ENCODE measurements at regions of chr1 and their contacts with region 1.

Region 1: DNA sequence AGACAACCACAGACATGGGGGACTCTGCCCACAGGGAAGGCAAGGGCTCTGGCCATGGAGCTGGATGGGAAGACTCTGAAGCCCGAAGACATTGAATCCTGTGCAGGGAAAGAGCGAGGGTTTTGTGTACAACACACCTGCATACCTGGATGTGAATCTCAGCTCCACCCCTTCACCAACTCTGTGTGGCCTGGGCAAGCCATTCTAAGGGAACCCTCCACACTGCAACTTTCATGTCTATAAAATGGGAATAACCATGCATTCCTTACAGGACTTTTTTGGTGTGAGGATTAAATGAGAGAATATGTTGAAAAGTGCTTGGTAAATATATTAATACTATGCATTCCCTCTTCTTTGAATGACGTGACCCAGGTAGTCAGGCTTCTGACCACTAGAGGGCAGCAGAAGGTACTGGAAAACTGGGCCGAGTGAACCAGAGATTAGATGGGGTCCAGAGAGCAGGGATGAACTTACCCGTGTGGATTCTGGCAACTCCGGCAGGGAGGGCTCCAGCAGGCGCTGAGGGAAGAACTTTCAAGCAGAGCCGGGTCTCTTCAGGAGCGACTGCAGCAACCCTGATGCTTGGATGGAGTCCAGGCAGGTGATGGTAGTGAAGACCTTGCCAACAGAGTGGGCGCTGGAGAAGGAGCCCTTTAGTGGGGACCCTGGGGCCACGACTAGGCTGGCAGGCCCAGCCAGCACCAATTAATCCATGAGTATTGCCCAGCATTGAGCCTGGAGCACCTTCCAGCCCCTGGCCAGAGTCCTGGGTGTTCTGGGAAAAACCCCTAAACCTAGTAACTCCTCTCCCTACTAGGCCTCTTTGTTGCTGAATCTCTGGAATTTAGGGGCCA is 834 bp upstream of the ELF3 start:
- DNase-seq: peak; percentile 86
- H3K4me3 ChIP-seq: peak overlapping the region in 3 of 4 donors; percentile 1 to 56 (median 38)
- H3K27ac ChIP-seq: peak overlapping the region; percentile 86 to 94 (median 92)
- H3K4me1 ChIP-seq: peaks cover 0 to 34% (median 24%) of the 10 kb centered on the region in 4 donors
- H3K27me3 ChIP-seq: no peaks in the 10 kb centered on the region
- CTCF ChIP-seq: peak; percentile 83 to 98 (median 90)
- EP300 ChIP-seq: no peak
- POLR2A ChIP-seq: no peak

Region 2: DNA sequence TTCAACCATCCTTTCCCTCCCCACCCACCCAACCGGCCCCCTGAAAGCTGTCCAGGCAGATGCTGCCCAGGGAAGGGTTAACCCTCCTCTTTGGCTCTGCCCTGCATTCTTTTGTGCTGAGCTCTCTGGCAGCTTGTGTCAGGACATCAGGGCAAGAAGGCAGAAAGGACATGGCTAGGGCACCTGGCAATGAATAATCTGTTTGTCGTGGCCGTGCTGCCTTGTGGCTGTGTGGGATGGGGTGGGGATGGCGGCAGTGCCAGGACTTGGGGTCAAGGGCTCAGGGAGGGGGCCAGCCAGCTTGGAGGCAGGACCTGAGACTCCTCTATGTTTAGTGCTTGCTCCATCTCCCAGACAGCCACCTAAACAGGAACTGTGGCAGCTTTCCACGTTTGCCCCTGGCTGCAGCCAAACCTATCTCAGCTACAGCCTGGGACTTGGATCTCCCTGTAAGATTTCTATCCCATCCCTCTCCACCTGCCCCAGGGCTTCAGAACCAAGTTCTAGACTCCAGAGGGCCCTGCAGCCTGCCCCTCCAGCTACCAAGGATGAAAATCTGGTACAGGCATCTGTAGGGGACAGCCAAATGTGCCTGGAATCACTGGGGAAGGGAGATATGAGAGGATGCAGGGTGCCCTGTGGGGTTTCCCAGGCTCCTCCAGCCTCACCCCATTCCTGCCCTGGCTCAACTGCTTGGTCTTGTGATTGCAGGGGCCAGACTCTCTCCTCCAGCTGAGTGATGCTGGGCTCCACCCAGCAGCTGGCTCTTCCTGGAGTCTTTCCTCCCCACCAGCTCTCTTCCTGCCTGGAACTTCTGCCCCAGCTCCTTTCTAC is 103.5 kb after region 1 on chr1:
- in situ Hi-C with region 1: loop called in 3 of 4 experiments (anchors 10 kb)
- intact Hi-C with region 1: no loop called
- DNase-seq: peak; percentile 43
- H3K4me3 ChIP-seq: no peak overlapping the region
- H3K27ac ChIP-seq: peak overlapping the region; percentile 35 to 69 (median 59)
- H3K4me1 ChIP-seq: peaks cover 13 to 43% (median 24%) of the 10 kb centered on the region in 4 donors
- H3K27me3 ChIP-seq: no peaks in the 10 kb centered on the region
- CTCF ChIP-seq: no peak
- EP300 ChIP-seq: no peak
- POLR2A ChIP-seq: no peak

Region 3: DNA sequence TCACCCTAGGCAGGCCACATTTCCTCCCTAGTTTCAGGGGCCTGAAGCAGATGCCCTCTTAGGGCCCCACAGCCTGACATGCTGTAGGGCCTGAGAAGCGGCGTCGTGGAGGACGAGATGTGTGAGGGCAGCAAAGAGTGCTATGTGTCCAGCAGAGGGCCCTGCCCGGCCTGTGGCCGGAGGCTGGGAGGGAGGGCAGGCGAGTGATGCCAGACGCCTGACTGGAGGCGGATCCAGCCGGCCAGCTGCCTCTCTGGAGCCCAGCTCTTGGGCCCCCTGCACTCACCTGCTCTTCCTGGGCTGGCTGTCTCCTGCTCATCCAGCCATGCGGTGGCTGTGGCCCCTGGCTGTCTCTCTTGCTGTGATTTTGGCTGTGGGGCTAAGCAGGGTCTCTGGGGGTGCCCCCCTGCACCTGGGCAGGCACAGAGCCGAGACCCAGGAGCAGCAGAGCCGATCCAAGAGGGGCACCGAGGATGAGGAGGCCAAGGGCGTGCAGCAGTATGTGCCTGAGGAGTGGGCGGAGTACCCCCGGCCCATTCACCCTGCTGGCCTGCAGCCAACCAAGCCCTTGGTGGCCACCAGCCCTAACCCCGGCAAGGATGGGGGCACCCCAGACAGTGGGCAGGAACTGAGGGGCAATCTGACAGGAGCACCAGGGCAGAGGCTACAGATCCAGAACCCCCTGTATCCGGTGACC is 113.2 kb after region 1 on chr1 and contains the start of gene GPR37L1:
- in situ Hi-C with region 1: loop called (anchors 5 to 10 kb)
- intact Hi-C with region 1: no loop called
- DNase-seq: no peak
- H3K4me3 ChIP-seq: no peak within 1 kb of the TSS
- H3K27ac ChIP-seq: no peak within 1 kb of the TSS
- H3K4me1 ChIP-seq: peaks cover 0 to 11% (median 0%) of the 10 kb centered on the region in 4 donors
- H3K27me3 ChIP-seq: no peaks in the 10 kb centered on the region
- CTCF ChIP-seq: peak in 2 of 5 experiments; percentile 7 to 10
- EP300 ChIP-seq: no peak
- POLR2A ChIP-seq: no peak
- total RNA-seq, gene GPR37L1: 0.55 to 0.95 TPM in 2 of 4 donors, not detected in the others

Region 4: DNA sequence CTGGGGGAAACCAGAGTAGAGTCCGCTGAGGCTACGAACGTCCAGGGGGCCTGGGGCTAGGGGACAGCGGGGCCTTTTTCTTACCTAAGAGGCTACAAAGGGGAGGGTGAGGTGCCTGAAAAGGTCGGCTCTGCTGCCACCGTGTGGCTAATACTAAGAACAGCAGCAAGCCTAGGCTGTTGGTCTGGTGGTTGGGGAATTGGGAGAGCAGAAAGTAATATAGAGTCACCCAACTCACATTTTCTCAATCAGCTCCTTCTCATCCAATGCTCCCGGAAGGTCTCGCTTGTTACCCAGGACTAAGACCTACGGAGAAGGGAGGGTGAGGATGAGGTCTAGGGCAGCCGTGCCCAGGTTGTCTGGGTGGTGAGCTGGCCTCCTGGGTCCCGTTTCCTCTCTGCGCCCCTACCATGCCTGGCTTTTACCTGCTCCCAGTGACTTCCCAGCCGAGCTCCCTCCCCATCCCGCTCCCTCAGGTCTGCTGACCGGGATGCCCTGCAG is 125.7 kb after region 1 on chr1:
- in situ Hi-C with region 1: no loop called
- intact Hi-C with region 1: loop called (anchors 5 kb)
- DNase-seq: peak; percentile 55
- H3K4me3 ChIP-seq: no peak overlapping the region
- H3K27ac ChIP-seq: peak overlapping the region in 3 of 4 donors; percentile 12 to 51 (median 15)
- H3K4me1 ChIP-seq: peaks cover 8 to 26% (median 12%) of the 10 kb centered on the region in 4 donors
- H3K27me3 ChIP-seq: no peaks in the 10 kb centered on the region
- CTCF ChIP-seq: peak; percentile 74 to 90 (median 83)
- EP300 ChIP-seq: no peak
- POLR2A ChIP-seq: no peak

Region 5: DNA sequence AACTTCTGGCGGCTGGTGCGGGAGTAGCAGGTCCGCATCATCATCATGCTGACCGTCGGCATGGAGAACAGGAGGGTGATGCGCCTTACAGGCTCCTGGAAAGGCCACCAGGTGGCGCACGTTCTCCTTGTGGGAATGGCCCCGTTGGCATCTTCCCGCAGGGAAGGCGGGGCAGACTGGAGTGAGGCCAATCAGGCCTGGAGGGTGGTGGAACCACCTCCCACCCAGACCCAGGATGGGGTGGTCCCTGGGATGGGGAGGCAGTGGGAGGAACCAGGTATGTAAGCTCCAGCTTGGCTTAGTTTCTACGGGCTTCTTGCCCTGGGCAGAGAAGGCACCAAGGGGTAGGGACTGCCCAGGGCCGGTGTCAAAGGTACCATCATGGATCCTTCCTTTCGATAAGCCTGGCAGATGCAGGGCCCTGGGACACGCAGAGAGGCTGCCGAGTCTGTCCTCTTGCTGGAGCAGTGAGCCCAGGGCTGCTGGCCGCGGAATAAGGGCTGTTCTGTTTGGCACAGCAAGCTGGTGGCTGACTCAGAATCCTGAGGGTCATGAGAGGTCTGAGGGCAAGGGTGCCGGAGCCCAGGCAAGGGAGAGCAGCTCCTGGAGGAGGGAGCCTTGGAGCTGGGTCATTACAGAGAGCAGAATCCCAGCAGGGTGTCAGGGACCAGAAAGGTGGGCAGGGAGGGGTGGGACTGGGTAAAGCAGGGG is 175.4 kb after region 1 on chr1:
- in situ Hi-C with region 1: no loop called
- intact Hi-C with region 1: no loop called
- DNase-seq: peak; percentile 86
- H3K4me3 ChIP-seq: no peak overlapping the region
- H3K27ac ChIP-seq: no peak overlapping the region
- H3K4me1 ChIP-seq: peaks cover 0 to 3% (median 0%) of the 10 kb centered on the region in 4 donors
- H3K27me3 ChIP-seq: no peaks in the 10 kb centered on the region
- CTCF ChIP-seq: peak; percentile 63 to 88 (median 83)
- EP300 ChIP-seq: no peak
- POLR2A ChIP-seq: no peak